CD8-positive, alpha-beta T cell (primary cell): ENCODE measurements at regions of chr15 and their contacts with region 1.

Region 1: DNA sequence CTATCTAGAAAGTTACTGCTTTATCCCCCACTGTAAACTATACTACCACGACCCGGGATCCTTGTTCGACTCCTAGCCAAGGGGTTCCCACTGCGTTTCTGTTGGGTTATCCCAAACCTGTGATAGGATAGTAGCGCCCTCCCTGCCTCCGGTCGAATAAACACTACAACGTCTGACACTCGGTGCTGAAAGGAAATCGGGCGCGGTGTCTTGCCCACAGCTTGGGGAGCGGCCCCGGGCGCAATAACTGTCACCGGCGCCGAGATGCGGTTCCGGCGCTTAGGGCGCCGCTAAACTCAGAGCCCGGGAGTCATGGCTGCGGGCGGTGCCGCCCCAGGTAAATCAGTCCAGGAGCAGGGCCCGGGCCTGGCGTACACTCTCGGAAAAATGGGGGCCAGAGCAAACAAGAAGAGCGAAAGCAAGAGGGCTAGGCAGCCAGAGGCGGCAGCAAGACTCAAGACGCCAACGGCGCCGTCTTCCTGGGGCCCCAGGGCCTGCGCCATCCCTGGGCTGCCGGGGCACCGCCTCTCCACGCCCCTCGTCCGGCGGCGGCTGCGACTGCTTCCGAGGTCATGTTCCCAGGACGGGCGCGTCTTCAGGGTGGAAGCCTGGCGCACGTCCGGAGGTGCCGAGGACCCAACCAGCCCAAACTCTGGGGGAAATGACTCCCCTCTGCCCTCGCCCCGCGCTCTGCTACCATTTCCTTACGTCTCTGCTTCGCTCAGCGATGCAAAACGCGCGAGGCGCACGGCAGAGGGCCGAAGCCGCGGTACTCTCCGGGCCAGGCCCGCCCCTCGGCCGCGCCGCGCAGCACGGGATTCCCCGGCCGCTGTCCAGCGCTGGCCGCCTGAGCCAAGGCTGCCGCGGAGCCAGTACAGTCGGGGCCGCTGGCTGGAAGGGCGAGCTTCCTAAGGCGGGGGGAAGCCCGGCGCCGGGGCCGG is at the start of gene DUT:
- DNase-seq: peak; percentile 64 to 89 (median 79)
- ATAC-seq: peak; percentile 83
- H3K4me3 ChIP-seq: peak within 1 kb of the TSS; percentile 65 to 74
- H3K4me3 Mint-ChIP-seq: peak within 1 kb of the TSS; percentile 99
- H3K27ac ChIP-seq: peak within 1 kb of the TSS; percentile 84 to 90
- H3K27ac Mint-ChIP-seq: peak within 1 kb of the TSS; percentile 99
- H3K4me1 ChIP-seq: peaks cover 11% of the 10 kb centered on the region
- H3K4me1 Mint-ChIP-seq: peaks cover 22% of the 10 kb centered on the region
- H3K27me3 ChIP-seq: no peaks in the 10 kb centered on the region
- H3K27me3 Mint-ChIP-seq: no peaks in the 10 kb centered on the region
- CTCF ChIP-seq: no peak
- total RNA-seq, gene DUT: 40.6 to 47.3 TPM

Region 2: GRCh38 chr15:48177766-48178647 is 153.1 kb before region 1 on chr15 and contains the start of gene MYEF2:
- CTCF ChIA-PET with region 1: no interaction called
- POLR2A ChIA-PET with region 1: no interaction called
- intact Hi-C with region 1: loop called (anchors 1 kb)
- DNase-seq: peak; percentile 39 to 81 (median 63)
- ATAC-seq: peak; percentile 76
- H3K4me3 ChIP-seq: peak within 1 kb of the TSS; percentile 47 to 49
- H3K4me3 Mint-ChIP-seq: peak within 1 kb of the TSS; percentile 85
- H3K27ac ChIP-seq: peak within 1 kb of the TSS; percentile 14 to 53
- H3K27ac Mint-ChIP-seq: peak within 1 kb of the TSS; percentile 73
- H3K4me1 ChIP-seq: no peaks in the 10 kb centered on the region
- H3K4me1 Mint-ChIP-seq: peaks cover 25% of the 10 kb centered on the region
- H3K27me3 ChIP-seq: no peaks in the 10 kb centered on the region
- H3K27me3 Mint-ChIP-seq: peaks cover 10% of the 10 kb centered on the region
- CTCF ChIP-seq: no peak
- total RNA-seq, gene MYEF2: 23.2 to 29.3 TPM

Region 3: DNA sequence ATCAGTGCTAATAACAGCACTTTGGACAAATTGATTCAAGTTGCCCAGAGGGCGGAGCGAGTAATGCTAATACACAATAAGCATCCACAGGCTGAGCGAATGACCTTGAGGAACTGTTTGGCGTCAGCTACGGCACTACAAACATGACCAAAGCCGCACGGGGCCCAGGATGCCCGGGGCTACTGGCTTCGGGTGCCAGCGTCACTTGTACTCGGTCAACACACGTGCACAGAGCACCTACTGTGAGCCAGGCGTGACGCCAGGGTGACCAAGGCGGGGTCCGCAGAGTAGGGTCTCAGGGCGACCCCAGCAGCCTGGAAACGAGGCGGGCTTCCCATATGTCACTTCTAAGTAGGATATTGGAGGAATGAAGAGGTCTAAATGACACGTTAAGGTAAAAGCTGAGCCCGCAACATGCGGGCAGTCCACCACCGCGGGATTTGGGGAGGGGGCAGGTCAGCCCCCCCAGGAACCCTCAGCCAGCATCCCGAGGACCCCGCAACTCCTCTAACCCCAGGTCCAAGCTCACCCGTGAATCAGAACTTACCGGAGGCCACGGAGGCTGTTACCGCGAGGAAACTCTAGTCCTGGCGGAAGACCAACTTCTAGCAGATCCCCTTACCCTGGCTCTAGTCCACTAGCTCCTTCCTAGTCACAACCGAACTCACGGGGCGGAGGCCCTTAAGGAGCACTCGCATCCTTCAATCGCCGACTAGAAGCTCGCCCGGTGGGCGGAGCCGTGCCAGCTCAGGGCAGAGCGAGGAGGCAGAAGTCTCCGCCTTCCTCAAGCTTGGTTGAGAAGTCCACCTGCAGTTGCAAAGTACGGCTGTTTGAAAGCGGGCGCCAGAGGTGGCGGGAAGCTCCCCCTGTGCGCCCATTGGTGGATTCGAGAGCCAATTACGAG is 479.5 kb after region 1 on chr15 and contains the start of gene CEP152:
- CTCF ChIA-PET with region 1: no interaction called
- POLR2A ChIA-PET with region 1: no interaction called
- intact Hi-C with region 1: loop called in 1 of 2 experiments (anchors 5 kb)
- DNase-seq: peak; percentile 96 to 100 (median 98)
- ATAC-seq: peak; percentile 94
- H3K4me3 ChIP-seq: peak within 1 kb of the TSS; percentile 83 to 95
- H3K4me3 Mint-ChIP-seq: peak within 1 kb of the TSS; percentile 90
- H3K27ac ChIP-seq: peak within 1 kb of the TSS; percentile 64 to 73
- H3K27ac Mint-ChIP-seq: peak within 1 kb of the TSS; percentile 71
- H3K4me1 ChIP-seq: peaks cover 13% of the 10 kb centered on the region
- H3K4me1 Mint-ChIP-seq: peaks cover 33% of the 10 kb centered on the region
- H3K27me3 ChIP-seq: no peaks in the 10 kb centered on the region
- H3K27me3 Mint-ChIP-seq: peaks cover 6% of the 10 kb centered on the region
- CTCF ChIP-seq: no peak
- total RNA-seq, gene CEP152: 3.9 to 5.1 TPM

Region 4: GRCh38 chr15:49169880-49170597 is 838.9 kb after region 1 on chr15 and contains the start of gene GALK2:
- CTCF ChIA-PET with region 1: no interaction called
- POLR2A ChIA-PET with region 1: no interaction called
- intact Hi-C with region 1: loop called in 1 of 2 experiments (anchors 5 kb)
- DNase-seq: peak; percentile 58 to 91 (median 81)
- ATAC-seq: peak; percentile 99
- H3K4me3 ChIP-seq: peak within 1 kb of the TSS; percentile 67 to 75
- H3K4me3 Mint-ChIP-seq: peak within 1 kb of the TSS; percentile 96
- H3K27ac ChIP-seq: peak within 1 kb of the TSS; percentile 74 to 88
- H3K27ac Mint-ChIP-seq: peak within 1 kb of the TSS; percentile 98
- H3K4me1 ChIP-seq: peaks cover 11% of the 10 kb centered on the region
- H3K4me1 Mint-ChIP-seq: peaks cover 43% of the 10 kb centered on the region
- H3K27me3 ChIP-seq: no peaks in the 10 kb centered on the region
- H3K27me3 Mint-ChIP-seq: no peaks in the 10 kb centered on the region
- CTCF ChIP-seq: no peak
- total RNA-seq, gene GALK2: 7.7 to 10.7 TPM